Spleen (tissue), 13 donors: ENCODE measurements at regions of chr7 and their contacts with region 1.

Region 1: GRCh38 chr7:7944619-7945282 is 23.8 kb upstream of the GLCCI1 start:
- DNase-seq: peak; percentile 86
- H3K4me3 ChIP-seq: peak overlapping the region in 5 of 8 donors; percentile 1 to 52 (median 4)
- H3K27ac ChIP-seq: peak overlapping the region; percentile 1 to 83 (median 64)
- H3K4me1 ChIP-seq: peaks cover 0 to 32% (median 21%) of the 10 kb centered on the region in 6 donors
- H3K27me3 ChIP-seq: no peaks in the 10 kb centered on the region
- CTCF ChIP-seq: no peak
- POLR2A ChIP-seq: no peak

Region 2: DNA sequence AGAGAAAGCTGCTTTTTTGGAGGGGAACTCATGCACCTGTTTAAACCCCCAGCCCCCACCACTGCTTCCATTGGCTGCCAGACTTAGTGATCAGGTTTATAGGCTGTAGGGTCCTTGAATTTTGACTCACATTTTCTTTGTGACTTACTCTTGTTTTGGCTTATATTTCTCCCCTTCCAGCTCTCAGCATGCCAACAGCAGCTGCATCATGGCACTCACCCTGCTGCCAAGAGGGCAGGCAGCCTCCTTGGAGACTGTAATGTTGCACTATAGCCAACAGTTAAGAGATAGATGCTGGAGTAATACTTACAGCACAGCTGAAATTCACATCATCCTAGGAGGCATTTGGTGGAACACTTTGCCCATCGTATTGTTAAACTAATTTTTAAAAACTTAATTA is 74.2 kb before region 1 on chr7:
- intact Hi-C with region 1: loop called (anchors 10 kb)
- DNase-seq: no peak
- H3K4me3 ChIP-seq: no peak overlapping the region
- H3K27ac ChIP-seq: no peak overlapping the region
- H3K4me1 ChIP-seq: peaks cover 10 to 25% (median 18%) of the 10 kb centered on the region in 6 donors
- H3K27me3 ChIP-seq: no peaks in the 10 kb centered on the region
- CTCF ChIP-seq: no peak
- POLR2A ChIP-seq: no peak

Region 3: DNA sequence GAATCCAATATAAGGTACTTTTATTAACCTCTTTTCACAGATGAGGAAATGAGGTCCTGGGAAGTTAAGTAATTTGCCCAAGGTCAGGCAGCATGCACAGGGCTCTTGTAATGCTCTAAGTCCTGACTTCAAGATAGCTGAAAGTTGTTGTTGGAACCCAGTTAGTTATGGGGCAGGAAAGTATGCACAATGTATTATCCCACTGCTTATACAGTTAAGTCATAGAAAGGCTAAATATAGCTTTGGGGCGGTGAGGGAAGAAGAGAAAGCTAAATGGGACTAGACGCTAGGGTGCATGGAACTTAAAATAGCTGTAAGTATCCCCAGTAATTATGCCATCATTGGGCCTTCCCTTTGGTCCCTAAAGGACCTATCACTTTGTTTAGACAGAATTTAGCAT is 33.0 kb after region 1 on chr7:
- intact Hi-C with region 1: no loop called
- DNase-seq: no peak
- H3K4me3 ChIP-seq: no peak overlapping the region
- H3K27ac ChIP-seq: peak overlapping the region in 5 of 8 donors; percentile 16 to 78 (median 61)
- H3K4me1 ChIP-seq: peaks cover 0 to 97% (median 63%) of the 10 kb centered on the region in 6 donors
- H3K27me3 ChIP-seq: no peaks in the 10 kb centered on the region
- CTCF ChIP-seq: no peak
- POLR2A ChIP-seq: no peak

Region 4: DNA sequence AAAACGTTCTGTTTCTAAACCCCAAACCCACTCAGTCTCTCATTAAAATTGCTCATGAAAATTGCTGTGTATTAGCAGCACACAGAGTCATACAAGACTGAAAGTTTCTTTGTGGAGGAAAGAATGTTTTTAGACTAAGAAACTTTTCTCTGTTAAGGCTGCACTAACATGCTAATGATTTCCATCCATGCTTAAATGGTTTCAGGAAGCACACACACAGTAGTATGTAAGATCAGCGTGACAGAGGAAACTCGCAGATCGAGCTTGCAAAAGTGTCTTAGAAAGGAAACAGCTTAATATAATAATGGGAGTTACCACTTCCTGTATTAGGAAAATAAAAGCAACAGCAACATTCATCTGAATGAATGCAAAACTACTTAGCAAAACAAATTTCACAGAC is 204.5 kb after region 1 on chr7:
- intact Hi-C with region 1: no loop called
- DNase-seq: no peak
- H3K4me3 ChIP-seq: peak overlapping the region in 1 of 8 donors; percentile 8
- H3K27ac ChIP-seq: peak overlapping the region in 7 of 8 donors; percentile 11 to 73 (median 54)
- H3K4me1 ChIP-seq: peaks cover 19 to 49% (median 32%) of the 10 kb centered on the region in 6 donors
- H3K27me3 ChIP-seq: no peaks in the 10 kb centered on the region
- CTCF ChIP-seq: no peak
- POLR2A ChIP-seq: no peak